ENCODE measurements at regions of chr15 and their contacts with region 1.

Region 1: GRCh38 chr15:56844892-56845291 is 73.6 kb upstream of the TCF12 start:
- DNase-seq: no peak
- H3K4me3 Mint-ChIP-seq: no peak overlapping the region
- H3K27ac Mint-ChIP-seq: no peak overlapping the region
- H3K4me1 Mint-ChIP-seq: no peaks in the 10 kb centered on the region
- H3K27me3 Mint-ChIP-seq: no peaks in the 10 kb centered on the region

Region 2: GRCh38 chr15:56616529-56616928 is 228.4 kb before region 1 on chr15:
- CTCF ChIA-PET with region 1: no interaction called
- intact Hi-C with region 1: loop called (anchors 10 kb)
- DNase-seq: no peak
- H3K4me3 Mint-ChIP-seq: no peak overlapping the region
- H3K27ac Mint-ChIP-seq: no peak overlapping the region
- H3K4me1 Mint-ChIP-seq: peaks cover 5% of the 10 kb centered on the region
- H3K27me3 Mint-ChIP-seq: peaks cover 10% of the 10 kb centered on the region